HEK293 (cell line): ENCODE measurements at regions of chr5 and their contacts with region 1.

Region 1: DNA sequence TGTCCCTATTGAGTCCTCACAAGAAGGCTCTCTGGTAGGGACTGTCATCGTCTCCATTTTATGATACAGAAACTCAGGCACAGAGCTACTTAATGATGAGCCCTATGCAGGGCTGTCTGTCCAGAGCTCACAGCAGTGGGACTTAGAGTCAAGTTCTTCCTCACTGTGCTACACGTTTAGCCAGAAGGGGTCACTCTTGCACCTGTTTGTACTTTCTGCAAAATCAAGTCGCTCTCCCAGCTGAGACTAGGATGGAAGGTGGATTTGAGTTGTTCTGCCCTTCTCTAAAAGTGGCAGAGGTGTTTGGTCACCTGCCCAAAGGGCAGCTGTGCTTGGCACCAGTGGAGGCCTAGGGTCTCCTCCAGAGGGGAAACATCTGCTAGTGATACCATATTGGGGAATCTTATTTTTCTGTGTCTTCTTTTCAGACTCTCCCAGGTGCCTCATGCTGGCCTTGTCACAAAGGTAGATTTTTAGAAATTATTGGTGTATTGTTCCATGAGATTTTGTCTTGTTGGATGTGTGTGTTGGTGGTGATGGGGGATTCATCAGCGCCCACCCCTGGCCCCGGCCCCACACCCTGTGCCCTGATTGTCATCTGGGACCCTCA is 104.2 kb downstream of the PPARGC1B start:
- H3K4me3 ChIP-seq: no peak overlapping the region
- H3K27ac ChIP-seq: no peak overlapping the region
- H3K4me1 ChIP-seq: no peaks in the 10 kb centered on the region
- CTCF ChIP-seq: peak; percentile 56

Region 2: GRCh38 chr5:149667084-149667828 is 167.1 kb before region 1 on chr5:
- CTCF ChIA-PET with region 1: interaction called, 60 read pairs
- POLR2A ChIA-PET with region 1: no interaction called
- H3K4me3 ChIP-seq: no peak overlapping the region
- H3K27ac ChIP-seq: no peak overlapping the region
- H3K4me1 ChIP-seq: no peaks in the 10 kb centered on the region
- CTCF ChIP-seq: 0 out of 2 replicates have a peak, but pooled peaks have one; percentile 20

Region 3: GRCh38 chr5:149816661-149817060 is 17.7 kb before region 1 on chr5:
- CTCF ChIA-PET with region 1: interaction called, 17 read pairs
- POLR2A ChIA-PET with region 1: no interaction called
- H3K4me3 ChIP-seq: no peak overlapping the region
- H3K27ac ChIP-seq: no peak overlapping the region
- H3K4me1 ChIP-seq: no peaks in the 10 kb centered on the region
- CTCF ChIP-seq: no peak

Region 4: DNA sequence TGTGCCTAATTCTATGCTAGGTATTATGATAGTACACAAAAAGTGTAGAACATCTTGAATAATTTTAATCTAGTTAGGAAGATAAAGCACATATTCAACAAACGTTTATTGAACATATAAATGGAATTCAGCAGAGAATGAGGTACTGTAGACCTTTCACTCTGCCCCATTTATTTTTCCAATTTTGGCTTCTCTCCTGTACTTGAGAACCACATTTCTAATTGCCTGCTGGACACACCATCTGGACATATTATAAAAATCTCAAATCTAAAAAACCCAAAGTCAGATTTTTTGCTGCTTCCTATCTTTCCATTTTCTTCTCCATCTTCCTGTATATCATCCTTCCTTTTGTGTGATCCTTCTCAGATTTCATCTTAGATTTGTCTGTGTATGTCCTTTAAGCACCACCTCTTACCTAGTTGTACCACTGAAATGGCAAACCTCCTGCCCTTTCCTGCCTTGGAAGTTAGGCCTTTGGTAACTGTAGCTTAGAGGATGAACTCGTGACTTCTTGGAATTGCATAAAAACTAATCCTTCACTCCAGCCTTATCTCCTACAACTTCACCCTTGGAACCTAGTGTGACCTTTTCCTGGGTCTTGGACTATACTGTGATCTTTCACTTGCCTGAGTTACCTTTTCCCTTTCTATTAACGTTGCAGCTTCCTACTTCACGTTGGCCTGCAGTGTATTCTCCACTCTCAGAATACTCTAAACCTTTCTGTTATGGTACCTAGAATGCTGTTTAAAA is 135.0 kb after region 1 on chr5:
- CTCF ChIA-PET with region 1: interaction called, 15 read pairs
- POLR2A ChIA-PET with region 1: no interaction called
- H3K4me3 ChIP-seq: no peak overlapping the region
- H3K27ac ChIP-seq: no peak overlapping the region
- H3K4me1 ChIP-seq: no peaks in the 10 kb centered on the region
- CTCF ChIP-seq: no peak

Region 5: DNA sequence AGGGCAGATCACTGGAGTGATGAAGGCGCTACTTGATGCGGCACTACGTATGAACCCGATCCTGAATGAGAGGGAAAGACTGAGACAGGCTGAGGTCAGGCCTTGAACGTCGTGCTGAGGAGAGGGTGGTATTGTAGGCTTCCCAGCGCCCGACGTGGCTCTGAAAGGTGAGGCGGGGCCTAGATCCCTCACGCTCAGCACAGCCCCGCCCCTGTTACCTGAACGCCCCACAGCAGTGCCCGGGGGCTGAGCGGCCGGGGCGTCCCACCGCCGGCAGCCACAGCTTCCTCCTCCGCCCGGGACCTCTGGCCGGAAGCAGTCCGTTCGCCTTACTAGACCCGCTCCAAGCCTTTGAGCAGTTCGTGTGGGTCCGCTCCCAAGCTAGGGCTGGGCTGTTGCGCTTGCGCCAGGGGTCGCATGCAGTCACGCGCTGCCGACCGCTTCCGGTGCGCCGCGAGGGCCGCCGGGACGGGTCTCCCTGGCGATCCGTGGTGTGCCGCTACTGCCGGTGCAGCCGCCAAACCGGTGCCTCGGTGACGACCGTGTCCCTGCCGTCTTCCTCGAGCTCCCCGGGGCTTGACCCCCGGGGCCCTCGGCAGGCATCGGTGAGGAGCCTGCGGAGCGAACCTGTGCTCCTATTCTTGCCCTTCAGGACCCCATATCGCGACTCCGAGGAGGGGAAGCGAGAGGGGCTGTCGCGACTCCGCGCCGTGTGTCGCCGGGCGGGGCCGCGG is 166.1 kb after region 1 on chr5 and contains the starts of genes HMGXB3 and TIGD6:
- CTCF ChIA-PET with region 1: interaction called, 234 read pairs
- POLR2A ChIA-PET with region 1: interaction called, 3 read pairs
- H3K4me3 ChIP-seq: peak within 1 kb of the TSS; percentile 93
- H3K27ac ChIP-seq: peak within 1 kb of the TSS; percentile 85
- H3K4me1 ChIP-seq: peaks cover 9% of the 10 kb centered on the region
- CTCF ChIP-seq: peak; percentile 46; the same call in 1 of the 2 replicates

Region 6: GRCh38 chr5:150155258-150156026 is 321.1 kb after region 1 on chr5 and contains the start of gene PDGFRB:
- CTCF ChIA-PET with region 1: no interaction called
- POLR2A ChIA-PET with region 1: no interaction called
- H3K4me3 ChIP-seq: no peak within 1 kb of the TSS
- H3K27ac ChIP-seq: no peak within 1 kb of the TSS
- H3K4me1 ChIP-seq: no peaks in the 10 kb centered on the region
- CTCF ChIP-seq: no peak